Mammary epithelial cell (primary cell): ENCODE measurements at regions of chr3 and their contacts with region 1.

Region 1: DNA sequence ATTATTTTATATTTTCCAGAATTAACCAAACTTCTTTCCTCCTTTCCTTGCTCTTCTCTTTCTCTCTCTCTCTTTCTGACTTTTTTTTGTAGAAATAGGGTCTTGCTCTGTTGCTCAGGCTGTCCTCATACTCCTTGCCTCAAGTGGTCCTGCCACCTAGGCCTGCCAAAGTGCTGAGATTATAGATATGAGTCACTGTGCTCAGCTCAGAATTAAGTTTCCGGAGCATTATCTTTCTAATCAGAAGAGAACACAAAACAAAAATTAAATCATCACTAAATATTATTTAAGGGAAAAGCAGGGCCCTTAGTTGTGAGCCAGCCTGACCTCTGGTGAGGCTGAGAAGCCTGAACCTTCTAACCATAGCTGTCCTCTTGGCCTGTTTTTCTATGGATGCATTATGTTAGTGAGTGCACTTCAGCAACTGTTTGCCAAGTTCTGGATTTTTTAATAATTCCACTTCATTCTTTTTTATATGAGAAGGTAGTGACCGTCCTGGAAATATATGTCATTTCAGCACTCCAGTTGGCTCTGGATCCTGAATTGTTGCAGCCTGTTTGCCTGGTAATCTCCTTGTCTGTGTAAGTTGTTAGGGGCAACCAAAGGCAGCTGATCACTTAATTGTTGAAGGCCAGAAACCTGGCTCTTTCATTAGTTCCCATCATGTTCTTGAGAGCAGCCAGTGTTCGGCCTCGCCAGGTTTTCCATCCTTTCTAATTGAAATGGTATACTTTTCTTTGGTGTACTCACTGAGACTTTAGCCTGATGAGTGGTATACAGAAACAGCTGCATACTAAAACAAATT is 168.4 kb downstream of the SOX2 start:
- DNase-seq: no peak
- H3K4me3 ChIP-seq: no peak overlapping the region
- H3K27ac ChIP-seq: no peak overlapping the region
- H3K4me1 ChIP-seq: no peaks in the 10 kb centered on the region
- H3K27me3 ChIP-seq: no peaks in the 10 kb centered on the region
- CTCF ChIP-seq: no peak

Region 2: DNA sequence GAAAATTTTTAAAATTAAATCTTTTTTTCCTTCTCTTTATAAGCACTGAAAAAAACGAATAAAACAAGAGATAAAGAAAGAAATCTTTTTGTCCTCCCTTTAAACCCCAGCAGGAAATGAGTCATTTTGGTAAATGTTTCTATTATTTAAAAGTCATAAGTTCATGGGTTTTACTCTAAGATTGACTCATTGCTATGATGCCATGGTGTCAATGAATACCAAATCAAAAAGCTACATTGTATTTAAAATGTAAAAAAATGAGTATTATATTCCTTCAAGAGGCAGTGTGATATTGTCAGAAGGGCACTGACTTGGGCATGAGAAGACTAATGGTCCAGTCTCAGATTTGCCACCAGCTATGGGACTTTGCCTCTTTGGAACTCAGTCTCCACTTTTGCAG is 587.1 kb before region 1 on chr3:
- CTCF ChIA-PET with region 1: no interaction called
- dilution Hi-C with region 1: no loop called
- in situ Hi-C with region 1: no loop called
- intact Hi-C with region 1: no loop called
- DNase-seq: peak; percentile 68
- H3K4me3 ChIP-seq: no peak overlapping the region
- H3K27ac ChIP-seq: peak overlapping the region; percentile 24
- H3K4me1 ChIP-seq: peaks cover 19% of the 10 kb centered on the region
- H3K27me3 ChIP-seq: no peaks in the 10 kb centered on the region
- CTCF ChIP-seq: no peak

Region 3: GRCh38 chr3:181790561-181790960 is 89.6 kb before region 1 on chr3:
- CTCF ChIA-PET with region 1: no interaction called
- dilution Hi-C with region 1: no loop called
- in situ Hi-C with region 1: loop called in 1 of 2 experiments (anchors 10 kb)
- intact Hi-C with region 1: no loop called
- DNase-seq: no peak
- H3K4me3 ChIP-seq: no peak overlapping the region
- H3K27ac ChIP-seq: no peak overlapping the region
- H3K4me1 ChIP-seq: no peaks in the 10 kb centered on the region
- H3K27me3 ChIP-seq: no peaks in the 10 kb centered on the region
- CTCF ChIP-seq: no peak